ENCODE measurements at regions of chr14 and their contacts with region 1.

Region 1: DNA sequence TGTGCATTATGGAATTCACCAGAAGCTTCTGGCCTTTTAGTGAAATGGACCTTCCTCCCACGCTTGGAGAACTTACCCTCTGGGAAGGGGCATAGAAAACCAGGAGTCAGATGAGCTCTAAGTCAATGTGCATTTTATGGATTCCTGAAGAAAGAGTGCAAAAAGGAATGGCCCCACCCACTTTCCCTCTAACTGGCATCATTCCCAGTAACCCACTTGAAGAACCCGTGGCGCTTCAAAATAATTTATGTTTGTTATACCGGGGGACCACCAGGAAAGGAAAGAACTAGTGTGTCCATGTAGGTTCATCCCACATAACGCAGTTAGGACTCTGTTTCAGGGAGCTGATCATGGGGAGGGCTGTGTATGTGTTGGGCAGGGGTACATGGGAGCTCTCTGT is 1153.4 kb downstream of the TMEM121 start:
- DNase-seq: no peak
- ATAC-seq: no peak
- H3K4me3 ChIP-seq: no peak overlapping the region
- H3K27ac ChIP-seq: no peak overlapping the region
- H3K4me1 ChIP-seq: no peaks in the 10 kb centered on the region
- H3K27me3 ChIP-seq: no peaks in the 10 kb centered on the region
- CTCF ChIP-seq: no peak

Region 2: GRCh38 chr14:106518054-106518943 is 161.5 kb before region 1 on chr14:
- CTCF ChIA-PET with region 1: no interaction called
- POLR2A ChIA-PET with region 1: no interaction called
- in situ Hi-C with region 1: no loop called
- intact Hi-C with region 1: no loop called
- DNase-seq: peak; percentile 12
- ATAC-seq: no peak
- H3K4me3 ChIP-seq: no peak overlapping the region
- H3K27ac ChIP-seq: no peak overlapping the region
- H3K4me1 ChIP-seq: no peaks in the 10 kb centered on the region
- H3K27me3 ChIP-seq: no peaks in the 10 kb centered on the region
- CTCF ChIP-seq: peak; percentile 22; the same call in 1 of the 2 replicates

Region 3: DNA sequence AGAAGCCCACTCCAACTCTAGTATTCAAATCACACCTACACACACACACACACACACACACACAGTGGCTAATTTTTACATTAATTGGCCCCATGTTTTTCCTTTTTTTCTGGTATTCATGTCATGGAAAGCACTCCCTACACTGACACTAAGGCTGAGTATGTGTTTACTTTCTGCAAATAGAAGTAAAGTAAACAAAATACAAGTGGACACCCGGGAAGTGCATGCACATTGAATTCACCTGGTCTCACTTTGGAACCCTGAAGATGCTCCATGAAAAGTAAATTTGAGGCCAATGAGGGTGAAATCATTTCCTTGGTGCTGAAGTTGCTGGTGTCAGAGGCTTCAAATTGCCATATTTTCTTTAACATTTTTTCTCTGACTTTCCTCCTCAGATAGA is 68.5 kb before region 1 on chr14:
- CTCF ChIA-PET with region 1: no interaction called
- POLR2A ChIA-PET with region 1: no interaction called
- in situ Hi-C with region 1: no loop called
- intact Hi-C with region 1: no loop called
- DNase-seq: no peak
- ATAC-seq: no peak
- H3K4me3 ChIP-seq: no peak overlapping the region
- H3K27ac ChIP-seq: no peak overlapping the region
- H3K4me1 ChIP-seq: no peaks in the 10 kb centered on the region
- H3K27me3 ChIP-seq: peaks cover 4% of the 10 kb centered on the region; the same call in 1 of the 2 replicates
- CTCF ChIP-seq: no peak

Region 4: GRCh38 chr14:106691601-106692291 is 12.0 kb after region 1 on chr14:
- CTCF ChIA-PET with region 1: interaction called, 10 read pairs
- POLR2A ChIA-PET with region 1: no interaction called
- in situ Hi-C with region 1: no loop called
- intact Hi-C with region 1: no loop called
- DNase-seq: peak; percentile 61
- ATAC-seq: no peak
- H3K4me3 ChIP-seq: no peak overlapping the region
- H3K27ac ChIP-seq: no peak overlapping the region
- H3K4me1 ChIP-seq: no peaks in the 10 kb centered on the region
- H3K27me3 ChIP-seq: no peaks in the 10 kb centered on the region
- CTCF ChIP-seq: peak; percentile 73

Measured in Panc1 (cell line).